Activated naive CD4-positive, alpha-beta T cell treated with anti-CD3 and anti-CD28 coated beads for 36 hours (primary cell): ENCODE measurements at regions of chr1 and their contacts with region 1.

Region 1: GRCh38 chr1:90509225-90510048 is 207.7 kb downstream of the BARHL2 start:
- DNase-seq: no peak
- H3K4me3 Mint-ChIP-seq: no peak overlapping the region
- H3K27ac Mint-ChIP-seq: no peak overlapping the region
- H3K4me1 Mint-ChIP-seq: no peaks in the 10 kb centered on the region
- H3K27me3 Mint-ChIP-seq: peaks cover 4% of the 10 kb centered on the region

Region 2: GRCh38 chr1:90474731-90475130 is 34.7 kb before region 1 on chr1:
- CTCF ChIA-PET with region 1: interaction called, 10 read pairs
- intact Hi-C with region 1: no loop called
- DNase-seq: no peak
- H3K4me3 Mint-ChIP-seq: no peak overlapping the region
- H3K27ac Mint-ChIP-seq: no peak overlapping the region
- H3K4me1 Mint-ChIP-seq: no peaks in the 10 kb centered on the region
- H3K27me3 Mint-ChIP-seq: no peaks in the 10 kb centered on the region

Region 3: DNA sequence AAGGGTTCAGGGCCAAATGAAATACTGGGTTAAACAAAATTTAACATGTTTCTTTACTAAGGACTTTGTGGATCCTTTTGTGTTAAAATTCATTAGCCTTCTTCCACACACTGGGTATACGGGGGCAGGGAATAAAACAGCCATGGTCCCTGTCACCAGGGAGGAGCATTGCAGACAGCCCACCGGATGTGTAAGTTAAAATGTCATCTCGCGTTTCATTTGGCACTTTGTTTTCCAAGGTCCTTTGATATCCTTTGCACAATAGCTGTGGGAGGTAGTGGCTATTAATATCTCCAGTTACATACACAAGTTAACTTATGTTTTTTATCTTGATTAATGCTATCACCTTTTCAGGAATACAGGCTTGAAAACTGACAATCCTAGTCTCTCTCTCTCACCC is 34.9 kb after region 1 on chr1:
- CTCF ChIA-PET with region 1: no interaction called
- intact Hi-C with region 1: no loop called
- DNase-seq: no peak
- H3K4me3 Mint-ChIP-seq: no peak overlapping the region
- H3K27ac Mint-ChIP-seq: no peak overlapping the region
- H3K4me1 Mint-ChIP-seq: no peaks in the 10 kb centered on the region
- H3K27me3 Mint-ChIP-seq: no peaks in the 10 kb centered on the region